HepG2 (cell line): ENCODE measurements at regions of chr6 and their contacts with region 1.

Region 1: DNA sequence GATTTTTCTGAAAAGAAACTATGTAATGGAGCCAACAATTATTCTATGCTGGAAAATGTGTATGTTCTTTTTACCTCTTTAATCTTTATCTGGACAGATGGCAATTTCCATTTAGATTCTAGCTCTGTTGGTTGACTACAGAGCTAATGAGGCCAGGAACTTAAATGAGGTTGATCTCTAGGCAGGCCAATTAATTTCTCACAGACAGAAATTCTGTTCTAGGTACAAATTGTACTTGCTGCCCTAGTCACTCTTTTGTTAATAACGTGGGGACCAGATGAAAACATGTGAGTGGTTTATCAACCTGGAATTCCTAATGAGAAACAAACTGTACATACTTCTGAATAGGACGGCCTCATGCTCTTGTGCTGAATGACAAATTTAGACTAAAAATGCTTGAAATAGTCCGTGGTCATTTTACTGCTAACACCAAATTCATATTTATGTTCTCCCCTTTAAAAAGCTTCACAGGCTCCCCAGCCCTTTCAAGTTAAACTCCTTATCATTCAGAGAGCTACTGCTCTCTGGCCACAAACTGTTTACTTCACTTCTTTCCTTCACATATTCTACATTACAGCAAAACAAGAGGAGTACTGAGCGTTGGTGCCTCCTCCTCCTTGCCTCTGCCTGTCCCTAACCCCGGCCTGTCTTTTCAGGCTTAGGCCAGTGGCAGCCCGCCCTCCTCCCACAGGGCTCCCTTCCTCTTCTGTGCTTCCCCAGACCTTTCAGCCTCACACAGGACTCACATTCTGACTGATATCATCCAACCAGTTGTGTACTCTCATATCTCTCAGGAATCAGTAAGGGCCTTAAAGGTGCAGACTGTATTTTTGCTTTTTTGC is 41.4 kb downstream of the DTNBP1 start:
- DNase-seq: no peak
- ATAC-seq: peak; percentile 53; the same call in 2 of the 3 replicates
- H3K4me3 ChIP-seq: no peak overlapping the region
- H3K27ac ChIP-seq: no peak overlapping the region
- H3K4me1 ChIP-seq: peaks cover under 1% of the 10 kb centered on the region
- H3K27me3 ChIP-seq: no peaks in the 10 kb centered on the region
- CTCF ChIP-seq: no peak
- EP300 ChIP-seq: no peak
- POLR2A ChIP-seq: no peak
- RAD21 ChIP-seq: no peak

Region 2: DNA sequence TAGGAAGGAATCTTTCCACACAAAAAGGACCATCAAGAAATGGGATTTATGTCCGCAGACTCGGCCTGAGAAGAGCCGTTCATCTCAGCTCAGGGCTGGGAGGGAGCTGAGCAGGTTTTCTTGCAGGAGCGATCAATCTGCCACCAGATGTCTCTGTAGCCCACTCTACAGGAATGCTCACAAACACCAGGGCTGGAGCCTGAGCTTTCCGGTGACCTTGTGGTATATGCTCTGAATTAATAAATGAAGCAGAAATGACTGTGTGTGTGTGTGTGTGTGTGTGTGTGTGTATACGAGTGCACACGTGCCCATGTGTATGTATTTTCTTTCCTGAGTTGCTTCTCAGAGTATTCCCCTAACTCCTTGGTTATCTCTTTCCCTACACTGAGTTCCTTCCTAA is 1491.8 kb before region 1 on chr6:
- CTCF ChIA-PET with region 1: no interaction called
- POLR2A ChIA-PET with region 1: no interaction called
- in situ Hi-C with region 1: no loop called
- intact Hi-C with region 1: loop called (anchors 1 kb)
- DNase-seq: peak; percentile 70
- ATAC-seq: peak; percentile 98
- H3K4me3 ChIP-seq: no peak overlapping the region
- H3K27ac ChIP-seq: no peak overlapping the region
- H3K4me1 ChIP-seq: peaks cover 25% of the 10 kb centered on the region
- H3K27me3 ChIP-seq: no peaks in the 10 kb centered on the region
- CTCF ChIP-seq: peak; percentile 94
- EP300 ChIP-seq: no peak
- POLR2A ChIP-seq: no peak
- RAD21 ChIP-seq: peak; percentile 73

Region 3: DNA sequence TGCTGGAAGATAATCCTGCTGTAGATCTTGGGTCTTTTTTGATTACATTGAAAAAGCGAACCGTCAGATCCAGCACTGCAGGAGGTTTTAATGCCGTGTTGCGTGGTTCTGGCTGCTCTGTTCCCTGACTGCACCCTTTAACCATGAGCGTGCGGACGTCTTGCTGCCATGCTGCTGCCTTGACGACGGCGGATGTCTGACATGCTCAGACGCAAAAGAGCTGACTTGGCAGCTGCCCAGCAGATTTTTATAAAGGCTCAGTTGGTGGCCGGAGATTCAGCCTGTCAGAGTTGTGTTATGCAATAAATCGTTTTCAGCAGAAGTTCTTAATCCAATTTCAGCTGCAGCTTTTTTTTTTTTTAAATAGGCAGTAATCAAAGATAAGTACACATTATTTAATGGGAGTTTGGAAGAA is 256.1 kb before region 1 on chr6:
- CTCF ChIA-PET with region 1: no interaction called
- POLR2A ChIA-PET with region 1: no interaction called
- in situ Hi-C with region 1: no loop called
- intact Hi-C with region 1: no loop called
- DNase-seq: no peak
- ATAC-seq: no peak
- H3K4me3 ChIP-seq: no peak overlapping the region
- H3K27ac ChIP-seq: no peak overlapping the region
- H3K4me1 ChIP-seq: peaks cover 41% of the 10 kb centered on the region
- H3K27me3 ChIP-seq: no peaks in the 10 kb centered on the region
- CTCF ChIP-seq: no peak
- EP300 ChIP-seq: no peak
- POLR2A ChIP-seq: no peak
- RAD21 ChIP-seq: no peak

Region 4: DNA sequence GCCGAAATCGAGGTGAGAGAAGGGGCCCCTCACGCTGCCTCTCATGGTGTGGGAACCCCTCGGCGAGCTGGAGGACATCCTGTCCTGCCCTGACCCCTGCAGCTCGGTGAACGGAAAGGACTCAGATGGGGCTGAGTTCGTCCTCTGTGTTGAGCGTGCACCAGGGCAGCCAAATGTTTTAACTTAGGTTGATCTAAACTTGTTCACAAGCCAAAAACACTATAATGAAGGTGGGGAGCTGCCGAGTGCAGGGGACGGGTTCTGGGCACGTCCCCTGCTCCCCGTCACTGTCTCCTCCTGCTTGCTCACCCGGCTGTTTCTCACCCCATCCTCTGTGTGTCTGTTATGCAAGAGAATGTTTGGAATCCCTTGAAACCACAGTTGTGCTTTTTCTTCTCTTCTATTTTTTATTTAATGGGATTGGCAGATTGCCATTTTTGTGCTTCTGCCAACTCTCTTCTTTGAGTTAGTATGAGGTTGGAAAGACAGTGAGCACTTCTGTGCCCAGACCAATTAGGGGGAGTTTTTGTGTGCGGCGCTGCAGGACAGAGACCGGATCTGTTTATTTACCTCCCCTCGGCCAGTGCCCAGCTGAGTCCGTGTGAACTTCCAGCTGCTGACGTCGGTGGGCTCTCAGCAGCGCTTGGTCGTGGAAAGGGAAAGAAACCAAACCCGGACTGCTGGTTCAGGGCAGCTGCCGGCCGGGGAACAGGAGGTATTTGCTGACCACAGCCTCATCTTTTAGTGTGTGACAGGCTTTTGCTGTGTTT is 116.7 kb before region 1 on chr6:
- CTCF ChIA-PET with region 1: no interaction called
- POLR2A ChIA-PET with region 1: no interaction called
- in situ Hi-C with region 1: no loop called
- intact Hi-C with region 1: loop called (anchors 2 kb)
- DNase-seq: peak; percentile 94
- ATAC-seq: peak; percentile 91
- H3K4me3 ChIP-seq: peak overlapping the region; percentile 24 to 60 (median 29); a peak in 5 of 6 replicates
- H3K27ac ChIP-seq: peak overlapping the region; percentile 49
- H3K4me1 ChIP-seq: peaks cover 30% of the 10 kb centered on the region
- H3K27me3 ChIP-seq: no peaks in the 10 kb centered on the region
- CTCF ChIP-seq: peak; percentile 60
- EP300 ChIP-seq: no peak
- POLR2A ChIP-seq: no peak
- RAD21 ChIP-seq: no peak

Region 5: DNA sequence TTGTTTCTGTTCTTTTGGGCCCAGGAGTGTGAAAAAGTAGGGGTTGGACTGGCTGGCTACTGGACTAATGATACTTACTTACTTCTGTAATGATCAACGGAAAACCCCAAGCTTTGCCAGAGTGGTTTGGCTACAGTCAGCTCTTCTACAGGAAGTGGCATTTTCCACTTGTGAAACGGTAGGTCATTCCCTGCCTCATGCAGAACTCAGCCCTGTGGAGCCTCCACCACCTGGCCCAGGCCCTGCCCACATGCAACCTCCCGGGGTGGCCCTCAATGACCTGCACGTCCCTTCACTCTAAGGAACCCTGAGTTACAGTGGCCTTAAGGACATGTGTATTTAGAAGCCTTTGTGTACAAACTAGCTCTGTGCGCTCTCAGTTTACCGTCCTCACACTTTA is 99.0 kb before region 1 on chr6:
- CTCF ChIA-PET with region 1: no interaction called
- POLR2A ChIA-PET with region 1: no interaction called
- in situ Hi-C with region 1: loop called (anchors 10 kb)
- intact Hi-C with region 1: no loop called
- DNase-seq: no peak
- ATAC-seq: no peak; the same call in 2 of the 3 replicates
- H3K4me3 ChIP-seq: no peak overlapping the region
- H3K27ac ChIP-seq: no peak overlapping the region
- H3K4me1 ChIP-seq: peaks cover 15% of the 10 kb centered on the region
- H3K27me3 ChIP-seq: no peaks in the 10 kb centered on the region
- CTCF ChIP-seq: no peak
- EP300 ChIP-seq: no peak
- POLR2A ChIP-seq: no peak
- RAD21 ChIP-seq: no peak

Region 6: GRCh38 chr6:15817121-15817520 is 195.7 kb after region 1 on chr6:
- CTCF ChIA-PET with region 1: no interaction called
- POLR2A ChIA-PET with region 1: no interaction called
- in situ Hi-C with region 1: no loop called
- intact Hi-C with region 1: no loop called
- DNase-seq: no peak
- ATAC-seq: no peak
- H3K4me3 ChIP-seq: no peak overlapping the region
- H3K27ac ChIP-seq: no peak overlapping the region
- H3K4me1 ChIP-seq: no peaks in the 10 kb centered on the region
- H3K27me3 ChIP-seq: peaks cover 3 to 26% of the 10 kb centered on the region in 2 experiments; a peak in 4 of 5 replicates
- CTCF ChIP-seq: no peak
- EP300 ChIP-seq: no peak
- POLR2A ChIP-seq: no peak
- RAD21 ChIP-seq: no peak

Region 7: GRCh38 chr6:16190214-16190613 is 568.8 kb after region 1 on chr6:
- CTCF ChIA-PET with region 1: no interaction called
- POLR2A ChIA-PET with region 1: no interaction called
- in situ Hi-C with region 1: no loop called
- intact Hi-C with region 1: no loop called
- DNase-seq: no peak
- ATAC-seq: no peak
- H3K4me3 ChIP-seq: no peak overlapping the region
- H3K27ac ChIP-seq: no peak overlapping the region
- H3K4me1 ChIP-seq: peaks cover 10% of the 10 kb centered on the region
- H3K27me3 ChIP-seq: no peaks in the 10 kb centered on the region
- CTCF ChIP-seq: no peak
- EP300 ChIP-seq: no peak
- POLR2A ChIP-seq: no peak
- RAD21 ChIP-seq: no peak